Activated CD4-positive, alpha-beta T cell treated with anti-CD3 and anti-CD28 coated beads for 36 hours (primary cell): ENCODE measurements at regions of chr20 and their contacts with region 1.

Region 1: GRCh38 chr20:52401431-52401830 is 209.9 kb upstream of the ZFP64 start:
- DNase-seq: no peak
- ATAC-seq: no peak
- H3K4me3 Mint-ChIP-seq: no peak overlapping the region
- H3K27ac Mint-ChIP-seq: no peak overlapping the region
- H3K4me1 Mint-ChIP-seq: peaks cover 54% of the 10 kb centered on the region
- H3K27me3 Mint-ChIP-seq: no peaks in the 10 kb centered on the region

Region 2: DNA sequence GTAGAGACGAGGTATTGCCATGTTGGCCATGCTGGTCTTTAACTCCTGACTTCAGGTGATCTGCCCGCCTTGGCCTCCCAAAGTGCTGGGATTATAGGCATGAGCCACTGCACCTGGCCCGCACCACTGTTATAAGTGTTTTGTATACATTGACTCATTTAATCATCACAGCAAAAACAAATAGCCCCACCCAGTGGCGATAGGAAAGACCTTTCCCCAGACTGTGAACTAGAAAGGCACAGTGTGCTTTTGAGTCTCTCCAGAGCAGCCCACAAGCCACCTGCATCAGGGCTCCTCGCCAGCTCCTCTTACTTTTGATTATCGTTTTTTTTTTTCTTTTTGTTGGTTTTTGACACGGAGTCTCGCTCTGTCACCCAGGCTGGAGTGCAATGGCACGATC is 182.0 kb before region 1 on chr20:
- CTCF ChIA-PET with region 1: no interaction called
- POLR2A ChIA-PET with region 1: no interaction called
- intact Hi-C with region 1: no loop called
- DNase-seq: peak; percentile 9
- ATAC-seq: no peak
- H3K4me3 Mint-ChIP-seq: no peak overlapping the region
- H3K27ac Mint-ChIP-seq: no peak overlapping the region
- H3K4me1 Mint-ChIP-seq: no peaks in the 10 kb centered on the region
- H3K27me3 Mint-ChIP-seq: peaks cover 9% of the 10 kb centered on the region

Region 3: DNA sequence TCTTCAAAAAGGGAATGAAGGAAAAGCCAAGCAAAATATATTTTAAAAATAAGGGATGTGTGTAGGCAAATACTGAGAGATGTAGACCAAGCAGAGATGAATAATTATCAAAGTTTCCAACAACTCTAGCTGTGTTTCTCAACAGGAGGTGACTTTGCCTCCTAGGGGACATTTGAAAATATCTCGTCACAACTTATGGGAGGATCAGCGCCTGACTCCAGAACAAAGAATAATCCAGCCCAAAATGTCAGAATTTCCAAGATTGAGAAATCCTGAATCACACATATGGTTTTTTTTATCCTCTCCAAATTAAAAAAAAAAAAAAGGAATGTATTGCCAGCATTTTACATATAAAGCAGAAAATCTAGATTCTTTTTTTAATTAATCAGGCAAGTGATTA is 31.3 kb after region 1 on chr20:
- CTCF ChIA-PET with region 1: no interaction called
- POLR2A ChIA-PET with region 1: no interaction called
- intact Hi-C with region 1: no loop called
- DNase-seq: no peak
- ATAC-seq: no peak
- H3K4me3 Mint-ChIP-seq: no peak overlapping the region
- H3K27ac Mint-ChIP-seq: no peak overlapping the region
- H3K4me1 Mint-ChIP-seq: no peaks in the 10 kb centered on the region
- H3K27me3 Mint-ChIP-seq: no peaks in the 10 kb centered on the region

Region 4: GRCh38 chr20:52465991-52466390 is 64.6 kb after region 1 on chr20:
- CTCF ChIA-PET with region 1: no interaction called
- POLR2A ChIA-PET with region 1: interaction called, 12 read pairs
- intact Hi-C with region 1: no loop called
- DNase-seq: no peak
- ATAC-seq: no peak
- H3K4me3 Mint-ChIP-seq: no peak overlapping the region
- H3K27ac Mint-ChIP-seq: no peak overlapping the region
- H3K4me1 Mint-ChIP-seq: no peaks in the 10 kb centered on the region
- H3K27me3 Mint-ChIP-seq: peaks cover 4% of the 10 kb centered on the region

Region 5: DNA sequence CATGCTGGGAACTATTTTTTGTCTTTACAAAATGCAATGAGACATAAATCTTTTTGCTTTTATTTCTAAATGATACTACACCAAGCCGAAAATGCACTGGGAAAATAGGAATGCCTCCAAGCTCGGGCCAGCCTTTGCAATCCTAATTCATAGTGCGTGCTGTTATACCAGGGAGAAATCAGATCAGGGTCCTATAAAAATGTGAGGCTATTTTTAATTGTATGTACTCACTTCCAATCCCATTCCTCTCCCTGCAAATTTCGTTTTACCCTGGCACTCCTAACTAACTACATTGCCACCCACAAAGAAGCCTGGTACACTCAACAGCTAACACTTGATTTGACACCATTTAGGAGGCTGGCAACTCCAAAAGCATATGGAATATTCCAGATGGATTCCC is 140.7 kb after region 1 on chr20:
- CTCF ChIA-PET with region 1: no interaction called
- POLR2A ChIA-PET with region 1: no interaction called
- intact Hi-C with region 1: no loop called
- DNase-seq: no peak
- ATAC-seq: no peak
- H3K4me3 Mint-ChIP-seq: no peak overlapping the region
- H3K27ac Mint-ChIP-seq: no peak overlapping the region
- H3K4me1 Mint-ChIP-seq: no peaks in the 10 kb centered on the region
- H3K27me3 Mint-ChIP-seq: no peaks in the 10 kb centered on the region